Left cardiac atrium (tissue), 4 donors: ENCODE measurements at regions of chr3 and their contacts with region 1.

Region 1: DNA sequence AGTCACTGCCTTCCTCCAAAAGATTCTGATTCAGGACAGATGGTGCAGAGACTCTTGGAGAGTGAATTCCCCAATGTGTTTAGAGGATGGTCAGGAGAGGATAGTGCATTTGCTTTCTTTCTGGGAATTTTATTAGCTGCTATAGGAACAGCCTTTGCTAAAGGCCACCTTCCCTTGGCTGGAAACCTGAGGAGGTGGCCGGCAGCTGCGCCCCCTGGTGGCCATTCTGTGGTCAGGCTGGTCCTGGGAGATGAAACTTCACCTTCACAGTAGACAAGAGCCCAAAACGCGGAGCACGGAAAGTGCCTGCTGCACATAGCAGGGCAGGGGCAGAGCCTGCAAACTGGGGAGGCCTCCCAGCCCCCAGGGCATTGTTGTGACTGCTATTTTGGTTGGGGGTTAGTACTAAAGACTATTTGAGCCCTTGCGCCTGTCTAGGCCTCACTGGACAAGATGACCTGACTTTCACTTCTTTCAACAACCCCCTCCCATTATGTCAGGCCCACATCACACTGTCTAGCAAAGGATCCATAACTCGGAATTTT is 34.3 kb downstream of the SEC22C start:
- DNase-seq: peak; percentile 69
- ATAC-seq: peak; percentile 57 to 65

Region 2: GRCh38 chr3:42229942-42230688 is 317.4 kb before region 1 on chr3:
- intact Hi-C with region 1: loop called in 1 of 2 experiments (anchors 10 kb)
- DNase-seq: no peak
- ATAC-seq: peak in 1 of 2 donors; percentile 43

Region 3: GRCh38 chr3:42247576-42248027 is 299.9 kb before region 1 on chr3:
- intact Hi-C with region 1: loop called in 1 of 2 experiments (anchors 5 kb)
- DNase-seq: no peak
- ATAC-seq: peak; percentile 41 to 53

Region 4: DNA sequence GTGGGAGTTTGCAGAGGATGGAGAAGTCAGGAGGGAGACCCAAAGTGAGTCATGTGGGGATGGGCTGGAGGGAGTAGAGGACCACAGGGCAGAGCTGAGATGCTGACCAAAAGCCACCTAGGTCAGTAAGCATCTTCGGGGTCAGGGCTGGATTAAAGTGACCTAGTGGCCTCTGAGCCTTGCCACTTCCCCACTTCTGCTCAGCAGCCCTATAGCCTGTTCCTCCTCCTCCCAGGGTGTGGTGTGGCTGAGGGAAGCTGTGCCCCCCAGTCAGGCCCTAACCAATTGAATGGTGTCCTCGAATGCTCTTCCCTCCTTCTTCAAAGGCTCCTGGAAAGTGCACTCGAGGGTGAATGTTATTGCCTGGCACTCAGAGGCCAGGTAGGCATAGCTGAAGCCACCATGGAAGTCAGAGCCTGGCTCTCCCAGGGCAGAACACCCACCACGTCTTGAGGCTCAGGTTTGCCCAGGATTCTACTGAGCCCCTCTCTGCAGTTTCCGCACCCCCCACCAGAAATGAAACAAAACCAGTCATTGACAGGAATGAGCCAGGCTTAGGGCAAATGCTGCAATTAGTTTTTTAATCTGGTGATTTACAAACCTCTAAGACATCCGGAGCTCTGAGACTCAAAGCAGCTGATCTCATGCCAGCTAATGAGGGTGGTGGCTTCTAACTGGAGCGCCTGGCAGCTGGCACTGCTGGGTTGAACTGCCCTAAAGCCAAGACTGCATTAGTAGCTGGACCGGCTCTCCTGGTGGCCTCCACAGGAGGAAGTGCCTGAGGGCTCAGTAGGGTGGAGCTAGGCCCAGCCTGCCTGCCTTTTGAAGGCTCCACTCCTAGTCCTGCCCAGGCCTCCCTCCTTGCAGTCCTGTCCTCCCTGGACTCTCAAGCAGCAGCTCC is 71.0 kb before region 1 on chr3:
- intact Hi-C with region 1: no loop called
- DNase-seq: no peak
- ATAC-seq: peak in 1 of 2 donors; percentile 74